Heart left ventricle (tissue), 16 donors: ENCODE measurements at regions of chr4 and their contacts with region 1.

Region 1: GRCh38 chr4:134906404-134907023 is 704.9 kb upstream of the PABPC4L start:
- DNase-seq: no peak
- ATAC-seq: no peak
- H3K4me3 ChIP-seq: no peak overlapping the region
- H3K27ac ChIP-seq: no peak overlapping the region
- H3K4me1 ChIP-seq: no peaks in the 10 kb centered on the region
- H3K27me3 ChIP-seq: no peaks in the 10 kb centered on the region
- CTCF ChIP-seq: peak in 4 of 12 donors; percentile 11 to 39 (median 28)
- POLR2A ChIP-seq: no peak

Region 2: DNA sequence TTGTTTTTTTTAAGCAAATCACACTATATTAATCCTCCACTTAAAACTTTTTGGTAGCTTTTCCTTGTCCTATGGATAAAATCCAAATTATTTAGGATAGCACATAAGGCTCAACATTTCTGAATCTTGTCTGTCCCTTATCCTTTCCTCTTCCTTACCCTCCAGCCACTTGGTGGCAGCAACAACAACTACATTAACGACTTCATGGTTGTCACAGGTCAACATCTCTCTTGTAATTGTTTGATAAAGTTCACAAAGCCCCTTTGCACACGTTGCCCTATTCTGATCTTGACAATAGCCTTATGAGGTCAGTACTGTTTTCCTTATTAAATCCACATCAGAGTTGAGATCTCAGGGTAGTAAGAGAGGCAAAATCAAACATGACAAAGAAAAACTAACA is 436.0 kb before region 1 on chr4:
- intact Hi-C with region 1: loop called in 1 of 10 experiments (anchors 10 kb)
- DNase-seq: peak in 1 of 5 donors; percentile 8
- ATAC-seq: no peak
- H3K4me3 ChIP-seq: no peak overlapping the region
- H3K27ac ChIP-seq: no peak overlapping the region
- H3K4me1 ChIP-seq: no peaks in the 10 kb centered on the region
- H3K27me3 ChIP-seq: no peaks in the 10 kb centered on the region
- CTCF ChIP-seq: peak in 10 of 12 donors; percentile 6 to 41 (median 26)
- POLR2A ChIP-seq: no peak